Activated naive CD4-positive, alpha-beta T cell treated with anti-CD3 and anti-CD28 coated beads, Interleukin-2, amount 10 ng/mL, durations not matched to agents 7 days and 5 days (primary cell): ENCODE measurements at regions of chr1 and their contacts with region 1.

Region 1: GRCh38 chr1:65687428-65688214 is 105.1 kb upstream of the PDE4B start:
- DNase-seq: peak; percentile 81
- H3K4me3 Mint-ChIP-seq: no peak overlapping the region
- H3K27ac Mint-ChIP-seq: no peak overlapping the region
- H3K4me1 Mint-ChIP-seq: peaks cover 5% of the 10 kb centered on the region
- H3K27me3 Mint-ChIP-seq: peaks cover 14% of the 10 kb centered on the region

Region 2: DNA sequence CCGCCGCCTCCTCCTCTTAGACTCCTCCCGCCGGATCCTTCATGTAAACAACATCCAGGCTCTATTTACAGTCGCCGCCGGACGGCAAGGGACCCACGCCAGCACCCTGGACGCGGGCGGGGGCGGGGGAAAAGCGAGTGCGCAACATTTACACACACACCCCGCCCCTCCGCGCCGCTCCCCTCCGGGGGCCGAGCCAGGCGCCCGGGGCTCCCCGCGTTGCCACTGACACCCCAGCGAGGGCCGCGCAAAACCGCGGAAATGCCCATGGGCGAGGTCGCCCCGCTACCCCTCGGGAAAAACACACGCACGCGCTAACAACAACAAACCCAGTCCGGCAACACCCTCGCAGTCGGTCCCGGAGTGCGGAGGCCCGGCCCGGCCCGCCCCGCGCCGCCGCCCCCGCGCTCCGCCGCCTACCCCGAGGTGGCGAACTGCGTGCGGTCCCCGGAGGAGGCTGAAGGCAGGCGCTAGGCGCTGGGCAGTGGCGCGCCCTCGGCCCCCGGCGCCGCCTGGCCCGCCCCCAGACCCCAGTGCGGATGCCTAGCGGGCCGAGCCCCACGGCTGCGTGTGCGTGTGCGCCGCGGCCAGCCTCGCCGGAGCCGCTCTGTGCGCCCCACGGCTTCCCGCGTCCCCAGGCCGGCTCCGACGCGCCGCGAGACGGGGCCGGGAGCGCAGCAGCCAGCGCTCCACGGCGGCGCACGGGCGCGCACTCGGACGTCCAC is 620.7 kb before region 1 on chr1:
- CTCF ChIA-PET with region 1: interaction called, 25 read pairs
- DNase-seq: peak; percentile 82
- H3K4me3 Mint-ChIP-seq: peak overlapping the region; percentile 92
- H3K27ac Mint-ChIP-seq: peak overlapping the region; percentile 80
- H3K4me1 Mint-ChIP-seq: peaks cover 45% of the 10 kb centered on the region
- H3K27me3 Mint-ChIP-seq: peaks cover 21% of the 10 kb centered on the region

Region 3: GRCh38 chr1:65235867-65236805 is 451.5 kb before region 1 on chr1:
- CTCF ChIA-PET with region 1: interaction called, 69 read pairs
- DNase-seq: no peak
- H3K4me3 Mint-ChIP-seq: no peak overlapping the region
- H3K27ac Mint-ChIP-seq: no peak overlapping the region
- H3K4me1 Mint-ChIP-seq: peaks cover 5% of the 10 kb centered on the region
- H3K27me3 Mint-ChIP-seq: peaks cover 19% of the 10 kb centered on the region

Region 4: DNA sequence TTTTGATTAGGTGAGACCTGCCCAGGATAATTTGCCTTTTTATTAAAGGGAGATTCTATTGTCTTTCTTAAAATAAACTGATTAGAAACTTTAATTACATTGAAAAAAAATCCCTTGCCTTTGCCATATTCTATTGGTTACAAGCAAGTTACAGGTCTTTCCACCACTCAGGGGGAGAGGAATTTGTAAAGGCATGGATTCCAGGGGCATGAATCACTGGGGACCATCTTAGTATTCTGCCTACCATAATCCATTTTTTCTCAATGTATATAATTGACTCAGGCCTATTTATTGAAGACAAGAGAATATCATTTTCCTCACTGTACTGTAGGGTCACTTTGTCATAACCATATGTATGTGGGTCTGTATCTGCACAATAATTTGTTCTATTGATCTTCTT is 19.3 kb before region 1 on chr1:
- CTCF ChIA-PET with region 1: no interaction called
- DNase-seq: no peak
- H3K4me3 Mint-ChIP-seq: no peak overlapping the region
- H3K27ac Mint-ChIP-seq: no peak overlapping the region
- H3K4me1 Mint-ChIP-seq: no peaks in the 10 kb centered on the region
- H3K27me3 Mint-ChIP-seq: peaks cover 5% of the 10 kb centered on the region